ENCODE measurements at regions of chr9 and their contacts with region 1.

Region 1: DNA sequence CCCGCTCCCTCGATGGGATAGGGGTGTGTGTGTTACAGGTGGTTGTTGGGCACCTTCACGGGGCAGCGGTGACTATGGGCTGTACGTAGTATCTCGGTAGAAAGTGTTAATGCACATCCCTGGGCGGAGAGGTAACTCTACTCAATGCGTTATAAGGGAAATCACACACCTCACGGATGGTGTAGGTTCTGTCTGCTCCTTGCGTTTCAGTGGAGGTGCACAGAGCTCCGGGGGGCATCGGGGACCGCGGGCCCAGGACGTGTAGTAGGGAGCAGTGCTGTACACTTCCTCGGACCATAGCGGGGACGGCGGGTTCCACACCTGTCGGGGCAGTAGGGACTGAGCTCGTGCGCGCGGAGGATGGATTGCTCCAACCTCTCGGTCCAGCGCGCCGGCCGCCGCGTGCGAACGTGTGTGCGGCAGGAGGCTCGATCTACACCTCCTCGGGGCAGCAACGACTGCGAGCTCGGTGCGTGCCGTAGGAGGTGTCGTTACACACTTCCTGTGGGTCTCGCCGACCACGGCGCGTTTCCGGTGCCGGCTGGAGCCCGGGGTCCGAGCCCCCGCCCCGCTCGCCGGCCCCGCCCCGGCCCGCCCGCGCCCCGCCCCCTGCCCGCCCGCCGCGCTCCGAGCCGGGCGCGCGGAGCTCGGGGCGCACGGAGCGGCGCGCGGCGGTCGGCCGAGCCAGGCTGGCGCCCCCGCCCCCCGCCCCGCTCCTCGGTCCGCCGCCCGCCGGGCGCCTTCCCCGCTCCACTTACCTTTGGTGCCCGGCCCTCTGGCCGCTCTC is at the start of gene KIAA1958:
- DNase-seq: peak; percentile 74
- ATAC-seq: peak; percentile 88
- H3K4me3 ChIP-seq: peak within 1 kb of the TSS; percentile 96
- H3K27ac ChIP-seq: no peak within 1 kb of the TSS; the same call in 1 of the 2 replicates
- H3K4me1 ChIP-seq: peaks cover 14% of the 10 kb centered on the region
- H3K27me3 ChIP-seq: no peaks in the 10 kb centered on the region
- CTCF ChIP-seq: no peak
- total RNA-seq, gene KIAA1958: 3.7 and 4.2 TPM in 2 replicates

Region 2: DNA sequence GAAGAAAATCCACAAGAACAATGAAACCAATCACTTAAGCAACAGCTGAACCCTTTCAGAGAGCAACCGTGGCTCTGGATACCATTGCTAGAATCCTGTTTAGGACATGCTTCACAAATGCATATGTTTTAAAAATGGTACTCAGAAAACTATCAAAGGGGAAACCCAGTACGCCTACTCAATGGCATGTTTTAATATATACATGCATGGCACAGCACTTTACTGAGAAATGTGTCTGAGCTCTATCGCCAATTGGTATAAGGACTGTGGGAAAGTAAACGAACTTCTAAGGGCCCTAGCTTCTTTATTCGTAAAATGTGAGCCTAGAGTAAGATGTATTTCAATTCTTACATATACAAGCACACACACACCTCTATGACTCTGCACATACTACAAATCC is 225.3 kb before region 1 on chr9:
- CTCF ChIA-PET with region 1: no interaction called
- POLR2A ChIA-PET with region 1: no interaction called
- intact Hi-C with region 1: no loop called
- DNase-seq: no peak
- ATAC-seq: no peak
- H3K4me3 ChIP-seq: no peak overlapping the region
- H3K27ac ChIP-seq: no peak overlapping the region
- H3K4me1 ChIP-seq: no peaks in the 10 kb centered on the region
- H3K27me3 ChIP-seq: no peaks in the 10 kb centered on the region
- CTCF ChIP-seq: no peak

Region 3: DNA sequence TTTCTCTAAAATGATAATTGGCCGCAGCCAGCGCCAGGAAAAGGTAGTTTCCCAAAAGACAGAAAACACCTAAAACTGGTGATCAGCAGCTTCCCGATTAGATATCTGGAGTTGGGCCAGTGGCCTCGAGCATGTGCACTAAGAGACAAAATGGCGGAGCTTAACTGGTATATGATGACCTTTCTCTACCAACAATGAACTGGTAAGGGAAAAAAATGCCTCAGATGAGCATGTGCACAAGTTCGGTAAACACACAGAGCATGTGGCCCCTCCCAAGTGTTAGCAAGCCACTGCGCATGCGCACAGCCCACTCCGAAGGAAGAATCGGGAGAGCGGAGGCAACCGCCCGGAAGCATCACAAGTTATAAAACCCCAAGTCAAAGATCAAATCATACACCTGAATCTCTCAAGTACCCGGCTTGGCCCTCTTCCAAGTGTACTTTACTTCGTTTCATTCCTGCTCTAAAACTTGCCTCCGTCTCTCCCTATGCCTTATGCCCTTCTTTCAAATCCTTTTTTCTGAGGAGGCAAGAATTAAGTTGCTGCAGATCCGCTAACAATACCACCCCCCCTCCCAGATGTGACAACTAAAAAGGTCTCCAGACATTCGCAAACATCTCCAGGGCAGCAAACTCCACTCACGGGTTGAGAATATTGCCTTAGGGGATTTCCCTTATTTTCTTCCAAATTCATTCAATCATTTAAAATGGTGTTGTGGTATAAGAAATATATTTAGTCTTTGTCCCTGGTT is 138.0 kb before region 1 on chr9:
- CTCF ChIA-PET with region 1: no interaction called
- POLR2A ChIA-PET with region 1: no interaction called
- intact Hi-C with region 1: no loop called
- DNase-seq: no peak
- ATAC-seq: no peak
- H3K4me3 ChIP-seq: no peak overlapping the region
- H3K27ac ChIP-seq: no peak overlapping the region
- H3K4me1 ChIP-seq: no peaks in the 10 kb centered on the region
- H3K27me3 ChIP-seq: no peaks in the 10 kb centered on the region
- CTCF ChIP-seq: no peak

Region 4: DNA sequence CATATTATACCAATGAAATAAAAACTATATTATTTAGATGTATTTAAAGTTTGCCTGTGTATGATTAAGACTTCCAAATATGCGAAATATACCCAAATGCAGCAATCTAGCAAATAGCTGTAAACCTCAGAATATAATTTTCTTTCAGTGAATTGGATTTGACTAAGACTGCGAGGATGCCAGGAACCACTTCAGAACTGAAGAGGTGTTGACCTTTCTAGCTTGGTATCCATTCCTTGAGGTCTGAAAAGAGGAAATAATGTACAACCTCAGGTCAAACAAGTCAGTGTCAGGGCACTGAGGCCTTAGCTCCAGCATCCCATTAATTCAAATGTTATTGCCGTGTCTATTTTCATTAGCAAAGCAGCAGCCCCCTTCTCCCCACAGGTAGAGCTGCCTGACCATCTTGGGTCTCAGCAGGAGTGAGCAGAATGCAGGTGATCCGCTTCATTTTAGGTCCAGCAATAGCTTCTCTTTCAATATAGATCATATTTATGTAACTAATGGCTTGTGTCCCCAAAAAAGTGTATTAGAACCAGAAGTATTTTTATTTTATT is 100.3 kb after region 1 on chr9:
- CTCF ChIA-PET with region 1: no interaction called
- POLR2A ChIA-PET with region 1: no interaction called
- intact Hi-C with region 1: no loop called
- DNase-seq: no peak
- ATAC-seq: no peak
- H3K4me3 ChIP-seq: no peak overlapping the region
- H3K27ac ChIP-seq: no peak overlapping the region
- H3K4me1 ChIP-seq: no peaks in the 10 kb centered on the region
- H3K27me3 ChIP-seq: no peaks in the 10 kb centered on the region
- CTCF ChIP-seq: no peak

Region 5: DNA sequence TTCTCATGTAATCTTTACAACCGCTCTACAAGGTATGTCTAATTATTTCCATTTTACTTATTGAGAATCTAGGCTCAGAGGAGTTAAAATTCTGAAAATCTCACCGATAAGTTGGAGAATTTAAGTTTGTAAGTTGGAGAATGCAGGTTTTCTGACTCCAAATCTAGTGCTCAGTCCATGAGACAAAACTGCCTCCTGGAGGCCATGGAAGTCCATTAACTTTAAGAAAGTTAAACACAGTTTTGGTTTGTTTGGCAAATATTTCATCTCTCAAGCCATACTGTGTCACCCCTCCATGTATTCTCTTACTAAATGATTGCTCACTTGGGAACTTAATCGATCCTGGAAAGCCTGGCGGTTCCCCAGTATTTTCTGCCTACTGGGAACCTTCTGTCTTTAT is 178.9 kb after region 1 on chr9:
- CTCF ChIA-PET with region 1: no interaction called
- POLR2A ChIA-PET with region 1: no interaction called
- intact Hi-C with region 1: loop called (anchors 2 kb)
- DNase-seq: peak; percentile 40
- ATAC-seq: peak; percentile 48
- H3K4me3 ChIP-seq: no peak overlapping the region
- H3K27ac ChIP-seq: no peak overlapping the region
- H3K4me1 ChIP-seq: peaks cover 4% of the 10 kb centered on the region; the same call in 1 of the 2 replicates
- H3K27me3 ChIP-seq: no peaks in the 10 kb centered on the region
- CTCF ChIP-seq: peak; percentile 52

Region 6: GRCh38 chr9:112705768-112706427 is 219.5 kb after region 1 on chr9:
- CTCF ChIA-PET with region 1: interaction called, 3 read pairs
- POLR2A ChIA-PET with region 1: no interaction called
- intact Hi-C with region 1: loop called (anchors 2 kb)
- DNase-seq: peak; percentile 35
- ATAC-seq: peak; percentile 49; the same call in 1 of the 2 replicates
- H3K4me3 ChIP-seq: no peak overlapping the region
- H3K27ac ChIP-seq: no peak overlapping the region
- H3K4me1 ChIP-seq: no peaks in the 10 kb centered on the region
- H3K27me3 ChIP-seq: no peaks in the 10 kb centered on the region
- CTCF ChIP-seq: peak; percentile 48

Measured in PC-3 (cell line).